ENCODE measurements at regions of chr9 and their contacts with region 1.

Region 1: GRCh38 chr9:27726244-27727081 is 153.2 kb upstream of the C9orf72 start:
- DNase-seq: peak in 1 of 2 experiments; percentile 22
- H3K4me3 ChIP-seq: no peak overlapping the region
- H3K27ac ChIP-seq: no peak overlapping the region
- H3K4me1 ChIP-seq: no peaks in the 10 kb centered on the region
- H3K27me3 ChIP-seq: no peaks in the 10 kb centered on the region
- CTCF ChIP-seq: peak; percentile 71

Region 2: DNA sequence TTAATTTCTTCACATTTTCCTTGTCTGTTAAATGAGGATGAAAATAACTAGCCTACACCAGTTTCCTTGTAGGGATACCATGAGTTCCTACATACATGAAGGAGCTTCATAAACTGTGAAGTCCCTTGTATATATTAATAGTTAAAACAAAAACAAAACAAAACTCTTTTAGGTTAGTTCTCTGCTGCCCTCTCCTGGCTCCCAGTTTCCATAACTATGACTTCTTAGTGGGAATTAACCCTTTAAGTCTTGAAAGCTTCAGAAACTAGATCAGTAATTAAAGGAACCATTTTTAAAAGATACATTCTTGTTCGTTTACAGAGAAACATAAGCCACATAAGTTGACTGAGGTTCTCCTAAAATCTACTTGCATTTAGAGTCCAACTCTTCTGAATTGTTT is 346.8 kb after region 1 on chr9:
- CTCF ChIA-PET with region 1: no interaction called
- POLR2A ChIA-PET with region 1: no interaction called
- intact Hi-C with region 1: loop called (anchors 10 kb)
- DNase-seq: no peak
- H3K4me3 ChIP-seq: no peak overlapping the region
- H3K27ac ChIP-seq: no peak overlapping the region
- H3K4me1 ChIP-seq: no peaks in the 10 kb centered on the region
- H3K27me3 ChIP-seq: no peaks in the 10 kb centered on the region
- CTCF ChIP-seq: peak; percentile 54

Measured in PC-9 (cell line).